Esophagus muscularis mucosa (tissue), 4 donors: ENCODE measurements at regions of chr2 and their contacts with region 1.

Region 1: DNA sequence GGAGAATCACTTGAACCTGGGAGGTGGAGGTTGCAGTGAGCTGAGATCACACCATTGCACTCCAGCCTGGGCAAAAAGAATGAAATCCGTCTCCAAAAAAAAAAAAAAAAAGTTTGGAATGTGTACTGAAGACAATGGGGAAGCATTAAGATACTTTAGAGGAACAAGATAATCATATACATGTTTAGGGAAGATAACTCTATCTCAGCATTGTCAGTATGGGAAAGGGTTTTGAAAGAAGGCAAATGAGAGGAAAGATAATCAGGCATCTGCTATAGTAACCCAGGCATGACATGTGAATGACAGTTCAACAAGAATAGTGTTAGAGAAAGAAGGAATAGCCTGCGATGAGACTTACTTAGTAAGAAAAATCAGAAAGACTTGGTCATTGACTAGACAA is 112.0 kb downstream of the ATAD2B start:
- DNase-seq: no peak
- H3K4me3 ChIP-seq: no peak overlapping the region
- H3K27ac ChIP-seq: no peak overlapping the region
- H3K4me1 ChIP-seq: no peaks in the 10 kb centered on the region
- H3K27me3 ChIP-seq: no peaks in the 10 kb centered on the region
- CTCF ChIP-seq: no peak
- EP300 ChIP-seq: no peak
- POLR2A ChIP-seq: no peak

Region 2: GRCh38 chr2:23426263-23426905 is 388.6 kb before region 1 on chr2:
- intact Hi-C with region 1: no loop called
- DNase-seq: no peak
- H3K4me3 ChIP-seq: peak overlapping the region in 1 of 4 donors; percentile 12
- H3K27ac ChIP-seq: peak overlapping the region; percentile 69 to 85 (median 82)
- H3K4me1 ChIP-seq: peaks cover 18 to 68% (median 55%) of the 10 kb centered on the region in 4 donors
- H3K27me3 ChIP-seq: no peaks in the 10 kb centered on the region
- CTCF ChIP-seq: no peak
- EP300 ChIP-seq: no peak
- POLR2A ChIP-seq: no peak

Region 3: GRCh38 chr2:23939987-23940717 is 125.2 kb after region 1 on chr2 and contains the start of gene UBXN2A:
- intact Hi-C with region 1: loop called (anchors 5 kb)
- DNase-seq: peak; percentile 92
- H3K4me3 ChIP-seq: peak within 1 kb of the TSS; percentile 69 to 97 (median 89)
- H3K27ac ChIP-seq: peak within 1 kb of the TSS; percentile 93 to 98 (median 96)
- H3K4me1 ChIP-seq: peaks cover 23 to 45% (median 41%) of the 10 kb centered on the region in 4 donors
- H3K27me3 ChIP-seq: no peaks in the 10 kb centered on the region
- CTCF ChIP-seq: no peak
- EP300 ChIP-seq: no peak
- POLR2A ChIP-seq: peak; percentile 27
- total RNA-seq, gene UBXN2A: 17.1 to 23.4 (median 20.3) TPM